H1 (cell line): ENCODE measurements at regions of chr4 and their contacts with region 1.

Region 1: DNA sequence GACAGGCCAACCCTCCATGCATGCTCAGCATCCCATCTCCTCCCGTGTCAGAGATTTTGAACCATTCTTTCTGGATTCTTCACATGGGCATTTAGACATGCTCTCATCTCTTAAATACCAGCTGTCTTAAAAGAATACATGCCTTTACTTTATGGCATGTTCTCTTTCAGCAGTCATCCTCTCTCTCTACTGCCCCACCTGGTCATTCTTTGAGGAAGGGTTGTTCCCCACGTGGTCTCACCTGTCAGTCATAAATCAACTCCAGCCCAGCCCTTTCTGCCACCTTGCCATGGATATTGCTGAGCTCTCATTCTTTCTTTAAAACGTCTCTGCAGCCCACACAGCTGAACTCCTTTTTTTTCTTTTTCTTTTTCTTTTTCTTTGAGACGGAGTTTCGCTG is 111.3 kb downstream of the ARHGAP10 start:
- DNase-seq: no peak
- H3K4me3 ChIP-seq: no peak overlapping the region
- H3K27ac ChIP-seq: no peak overlapping the region
- H3K4me1 ChIP-seq: peaks cover 0 to 10% (median 4%) of the 10 kb centered on the region in 4 experiments; a peak in 4 of 7 replicates
- H3K27me3 ChIP-seq: no peaks in the 10 kb centered on the region
- CTCF ChIP-seq: peak; percentile 28 to 64 (median 46); a peak in 3 of 4 replicates
- EP300 ChIP-seq: no peak
- POLR2A ChIP-seq: no peak
- RAD21 ChIP-seq: peak; percentile 31 to 34; a peak in 3 of 4 replicates

Region 2: DNA sequence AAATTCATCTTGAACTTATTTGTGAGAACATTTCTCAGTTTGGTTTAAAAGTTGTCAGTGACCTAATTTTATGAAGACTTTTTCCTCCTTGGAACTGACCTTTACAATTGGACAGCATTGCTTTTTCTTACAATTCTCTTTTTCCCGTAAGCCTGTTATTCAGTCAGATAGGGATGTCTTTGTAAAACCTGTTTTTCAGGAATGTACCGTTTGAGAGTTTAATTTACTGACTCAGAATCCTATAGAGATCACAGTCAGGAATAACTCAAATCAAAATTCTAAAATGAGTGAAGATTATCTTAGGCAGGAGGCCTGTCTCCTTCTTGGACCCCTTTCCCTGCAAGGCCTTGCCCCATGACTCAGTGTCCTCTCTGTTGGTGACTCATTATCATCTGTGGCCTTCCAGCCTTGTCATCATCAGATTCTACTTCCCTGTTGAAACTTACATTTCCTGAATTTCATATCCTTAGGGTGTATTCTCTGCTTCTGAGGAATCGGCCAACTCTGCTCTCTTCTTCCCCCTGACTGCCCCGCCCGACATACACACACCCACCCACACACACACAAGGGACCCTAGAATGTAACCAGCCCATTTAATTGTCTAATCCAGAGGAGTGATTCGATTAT is 11.5 kb before region 1 on chr4:
- CTCF ChIA-PET with region 1: interaction called, 12 read pairs
- POLR2A ChIA-PET with region 1: no interaction called
- DNase-seq: no peak
- H3K4me3 ChIP-seq: no peak overlapping the region
- H3K27ac ChIP-seq: no peak overlapping the region
- H3K4me1 ChIP-seq: peaks cover 0 to 7% (median 0%) of the 10 kb centered on the region in 4 experiments; a peak in 2 of 7 replicates
- H3K27me3 ChIP-seq: no peaks in the 10 kb centered on the region
- CTCF ChIP-seq: no peak
- EP300 ChIP-seq: no peak
- POLR2A ChIP-seq: no peak
- RAD21 ChIP-seq: no peak